ENCODE measurements at regions of chr2 and their contacts with region 1.

Region 1: GRCh38 chr2:101655702-101656422 is 41.6 kb upstream of the MAP4K4 start:
- DNase-seq: no peak
- ATAC-seq: no peak
- H3K4me3 Mint-ChIP-seq: no peak overlapping the region
- H3K27ac Mint-ChIP-seq: peak overlapping the region; percentile 41
- H3K4me1 Mint-ChIP-seq: peaks cover 26% of the 10 kb centered on the region
- H3K27me3 Mint-ChIP-seq: no peaks in the 10 kb centered on the region
- CTCF ChIP-seq: no peak

Region 2: GRCh38 chr2:101173707-101174295 is 482.1 kb before region 1 on chr2:
- CTCF ChIA-PET with region 1: no interaction called
- POLR2A ChIA-PET with region 1: interaction called, 12 read pairs
- intact Hi-C with region 1: no loop called
- DNase-seq: peak; percentile 39
- ATAC-seq: peak; percentile 100
- H3K4me3 Mint-ChIP-seq: peak overlapping the region; percentile 29
- H3K27ac Mint-ChIP-seq: peak overlapping the region; percentile 87
- H3K4me1 Mint-ChIP-seq: peaks cover 35% of the 10 kb centered on the region
- H3K27me3 Mint-ChIP-seq: peaks cover 2% of the 10 kb centered on the region
- CTCF ChIP-seq: no peak

Region 3: DNA sequence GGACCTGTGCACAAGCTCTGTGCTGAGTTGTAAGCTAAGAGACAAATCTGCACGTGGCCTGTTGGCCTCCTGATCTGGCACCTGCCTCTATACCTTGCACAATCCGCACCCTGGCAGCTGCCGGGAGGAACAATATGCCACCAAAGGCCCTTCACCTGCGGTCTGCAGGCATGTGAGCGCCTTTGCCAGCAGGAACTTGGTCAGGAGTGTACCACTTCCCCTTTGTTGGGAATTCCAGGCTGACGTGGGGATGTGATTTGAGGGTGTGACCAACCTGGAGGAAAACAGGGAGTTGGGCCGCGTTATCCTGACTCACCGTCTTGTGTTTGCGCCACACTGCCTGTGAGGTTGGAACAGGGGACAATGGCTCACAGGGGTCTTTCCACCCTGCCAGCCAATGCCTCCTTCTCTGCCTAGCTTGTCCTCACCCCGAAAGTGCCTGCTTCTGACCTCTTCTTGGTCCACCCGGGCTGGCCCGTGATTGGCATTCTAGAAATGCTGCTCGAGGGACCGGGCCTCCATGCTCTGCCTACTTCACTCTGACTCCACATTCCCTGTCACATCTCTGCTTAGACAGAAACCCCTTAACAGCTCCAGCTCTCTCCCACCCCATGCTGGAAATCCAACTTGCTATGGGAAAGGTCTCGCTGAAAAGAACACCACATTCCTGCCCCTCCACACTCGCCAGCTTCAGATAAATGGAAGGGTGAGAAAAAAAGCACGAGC is 25.5 kb before region 1 on chr2:
- CTCF ChIA-PET with region 1: no interaction called
- POLR2A ChIA-PET with region 1: interaction called, 13 read pairs
- intact Hi-C with region 1: no loop called
- DNase-seq: no peak
- ATAC-seq: no peak
- H3K4me3 Mint-ChIP-seq: no peak overlapping the region
- H3K27ac Mint-ChIP-seq: no peak overlapping the region
- H3K4me1 Mint-ChIP-seq: peaks cover 17% of the 10 kb centered on the region
- H3K27me3 Mint-ChIP-seq: no peaks in the 10 kb centered on the region
- CTCF ChIP-seq: no peak

Region 4: DNA sequence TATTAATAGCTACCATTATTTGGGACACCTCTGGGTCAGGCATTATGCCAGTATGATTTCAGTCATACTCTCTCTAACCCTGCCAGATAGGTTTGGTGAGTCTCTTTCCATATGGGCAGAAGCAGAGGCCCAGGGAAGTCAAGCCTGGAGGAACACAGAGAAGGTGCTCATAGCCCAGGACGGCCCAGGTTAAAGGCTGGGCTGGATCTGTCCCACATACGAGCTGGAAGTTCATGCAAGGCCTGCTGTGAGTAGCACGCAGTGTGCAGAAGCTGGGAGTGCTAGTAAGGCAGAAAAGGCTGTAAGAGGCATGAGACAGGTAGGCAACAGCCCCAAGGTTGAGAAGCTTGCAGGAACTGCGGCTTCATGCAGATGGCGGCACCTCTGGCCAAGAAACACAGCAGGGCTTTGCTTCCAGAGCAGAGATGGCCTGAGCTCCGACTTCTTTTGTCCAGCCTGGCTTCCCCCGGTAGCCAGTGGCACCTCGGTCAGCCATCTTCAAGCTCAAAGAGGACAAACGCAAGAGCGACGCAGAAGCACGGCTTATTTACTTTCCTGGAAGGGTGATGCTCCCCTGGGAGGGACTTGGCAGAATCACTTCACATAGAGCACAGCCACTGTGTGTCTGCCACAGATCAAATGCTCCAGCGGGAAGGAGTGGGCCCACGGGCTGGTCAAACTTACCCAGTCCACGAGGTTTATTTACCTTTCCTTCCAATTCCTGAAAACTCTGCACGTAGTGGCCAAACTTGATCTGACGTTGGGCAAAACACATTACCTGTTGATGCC is 16.9 kb before region 1 on chr2:
- CTCF ChIA-PET with region 1: no interaction called
- POLR2A ChIA-PET with region 1: interaction called, 12 read pairs
- intact Hi-C with region 1: no loop called
- DNase-seq: no peak
- ATAC-seq: no peak
- H3K4me3 Mint-ChIP-seq: no peak overlapping the region
- H3K27ac Mint-ChIP-seq: no peak overlapping the region
- H3K4me1 Mint-ChIP-seq: no peaks in the 10 kb centered on the region
- H3K27me3 Mint-ChIP-seq: no peaks in the 10 kb centered on the region
- CTCF ChIP-seq: no peak

Region 5: GRCh38 chr2:101677658-101678057 is 21.8 kb after region 1 on chr2:
- CTCF ChIA-PET with region 1: no interaction called
- POLR2A ChIA-PET with region 1: interaction called, 3 read pairs
- intact Hi-C with region 1: loop called (anchors 2 kb)
- DNase-seq: no peak
- ATAC-seq: peak; percentile 70
- H3K4me3 Mint-ChIP-seq: no peak overlapping the region
- H3K27ac Mint-ChIP-seq: peak overlapping the region; percentile 24
- H3K4me1 Mint-ChIP-seq: peaks cover 32% of the 10 kb centered on the region
- H3K27me3 Mint-ChIP-seq: no peaks in the 10 kb centered on the region
- CTCF ChIP-seq: no peak

Region 6: GRCh38 chr2:101900375-101900774 is 244.5 kb after region 1 on chr2:
- CTCF ChIA-PET with region 1: no interaction called
- POLR2A ChIA-PET with region 1: no interaction called
- intact Hi-C with region 1: no loop called
- DNase-seq: no peak
- ATAC-seq: peak; percentile 25
- H3K4me3 Mint-ChIP-seq: no peak overlapping the region
- H3K27ac Mint-ChIP-seq: peak overlapping the region; percentile 5
- H3K4me1 Mint-ChIP-seq: peaks cover 7% of the 10 kb centered on the region
- H3K27me3 Mint-ChIP-seq: no peaks in the 10 kb centered on the region
- CTCF ChIP-seq: no peak